K562 (cell line): ENCODE measurements at regions of chr6 and their contacts with region 1.

Region 1: GRCh38 chr6:82270881-82271645 is 23.5 kb upstream of the IBTK start:
- DNase-seq: peak; percentile 38 to 44 (median 40)
- ATAC-seq: peak; percentile 71
- H3K4me3 ChIP-seq: no peak overlapping the region
- H3K27ac ChIP-seq: no peak overlapping the region
- H3K4me1 ChIP-seq: no peaks in the 10 kb centered on the region
- H3K27me3 ChIP-seq: peaks cover 4 to 5% of the 10 kb centered on the region in 2 experiments; a peak in 3 of 5 replicates
- CTCF ChIP-seq: peak in 2 of 3 experiments; percentile 36 to 73; a peak in 4 of 6 replicates
- EP300 ChIP-seq: no peak
- POLR2A ChIP-seq: no peak
- RAD21 ChIP-seq: peak; percentile 82 to 87

Region 2: GRCh38 chr6:82017288-82017687 is 253.8 kb before region 1 on chr6:
- CTCF ChIA-PET with region 1: no interaction called
- POLR2A ChIA-PET with region 1: no interaction called
- in situ Hi-C with region 1: no loop called
- intact Hi-C with region 1: no loop called
- DNase-seq: no peak
- ATAC-seq: no peak
- H3K4me3 ChIP-seq: no peak overlapping the region
- H3K27ac ChIP-seq: no peak overlapping the region
- H3K4me1 ChIP-seq: no peaks in the 10 kb centered on the region
- H3K27me3 ChIP-seq: no peaks in the 10 kb centered on the region
- CTCF ChIP-seq: no peak
- EP300 ChIP-seq: no peak
- POLR2A ChIP-seq: no peak
- RAD21 ChIP-seq: no peak

Region 3: GRCh38 chr6:82353848-82354247 is 82.8 kb after region 1 on chr6:
- CTCF ChIA-PET with region 1: no interaction called
- POLR2A ChIA-PET with region 1: no interaction called
- in situ Hi-C with region 1: no loop called
- intact Hi-C with region 1: no loop called
- DNase-seq: no peak
- ATAC-seq: no peak
- H3K4me3 ChIP-seq: no peak overlapping the region
- H3K27ac ChIP-seq: no peak overlapping the region
- H3K4me1 ChIP-seq: no peaks in the 10 kb centered on the region
- H3K27me3 ChIP-seq: no peaks in the 10 kb centered on the region
- CTCF ChIP-seq: no peak
- EP300 ChIP-seq: no peak
- POLR2A ChIP-seq: no peak
- RAD21 ChIP-seq: no peak

Region 4: DNA sequence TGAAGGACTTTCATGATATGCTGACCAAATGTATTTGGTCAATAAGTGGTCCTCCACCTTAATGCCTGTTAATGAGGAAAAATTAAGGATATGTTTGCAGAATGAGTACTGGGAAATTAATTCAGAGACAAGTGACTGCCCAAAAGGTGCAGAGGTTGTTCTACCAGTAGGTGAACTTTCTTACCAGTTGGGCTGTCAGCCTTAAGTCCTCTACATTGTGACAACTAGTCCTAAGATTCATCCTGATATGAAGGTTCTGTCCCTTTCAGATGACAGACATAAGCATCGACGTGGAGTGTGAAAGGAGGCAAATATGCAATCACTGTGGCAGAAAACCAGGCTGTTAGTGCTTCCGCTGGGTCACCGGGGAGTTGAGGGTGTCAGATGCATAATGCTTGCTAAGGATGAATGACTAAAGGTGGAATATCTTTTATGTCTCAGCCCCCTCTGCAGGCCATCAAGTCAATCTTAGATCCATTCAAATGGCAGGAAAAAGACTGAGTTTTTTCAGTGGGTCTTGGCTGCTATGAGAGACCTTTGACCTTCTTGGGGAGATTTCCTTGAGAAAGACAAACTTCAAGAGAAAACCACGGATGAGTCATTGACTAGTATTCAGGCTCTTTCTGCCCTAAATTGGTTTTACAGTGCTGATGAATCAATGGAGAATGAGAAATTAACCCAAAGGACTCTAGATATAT is 318.6 kb after region 1 on chr6:
- CTCF ChIA-PET with region 1: interaction called, 3 read pairs
- POLR2A ChIA-PET with region 1: no interaction called
- in situ Hi-C with region 1: no loop called
- intact Hi-C with region 1: loop called (anchors 5 kb)
- DNase-seq: peak in 2 of 4 experiments; percentile 8 to 10
- ATAC-seq: peak; percentile 66
- H3K4me3 ChIP-seq: no peak overlapping the region
- H3K27ac ChIP-seq: no peak overlapping the region
- H3K4me1 ChIP-seq: no peaks in the 10 kb centered on the region
- H3K27me3 ChIP-seq: no peaks in the 10 kb centered on the region
- CTCF ChIP-seq: peak in 1 of 3 experiments; percentile 46; a peak in 2 of 6 replicates
- EP300 ChIP-seq: no peak
- POLR2A ChIP-seq: no peak
- RAD21 ChIP-seq: peak; percentile 61 to 77

Region 5: GRCh38 chr6:82712852-82713251 is 441.8 kb after region 1 on chr6:
- CTCF ChIA-PET with region 1: no interaction called
- POLR2A ChIA-PET with region 1: no interaction called
- in situ Hi-C with region 1: no loop called
- intact Hi-C with region 1: loop called (anchors 2 kb)
- DNase-seq: peak; percentile 6 to 36 (median 27)
- ATAC-seq: 0 out of 3 replicates have a peak, but pooled peaks have one; percentile 58
- H3K4me3 ChIP-seq: no peak overlapping the region
- H3K27ac ChIP-seq: no peak overlapping the region
- H3K4me1 ChIP-seq: no peaks in the 10 kb centered on the region
- H3K27me3 ChIP-seq: peaks cover 0 to 3% of the 10 kb centered on the region in 2 experiments; a peak in 1 of 5 replicates
- CTCF ChIP-seq: peak in 1 of 3 experiments; percentile 61; a peak in 2 of 6 replicates
- EP300 ChIP-seq: no peak
- POLR2A ChIP-seq: no peak
- RAD21 ChIP-seq: peak; percentile 25 to 61; a peak in 3 of 4 replicates

Region 6: GRCh38 chr6:83215131-83216047 is 944.3 kb after region 1 on chr6:
- CTCF ChIA-PET with region 1: no interaction called
- POLR2A ChIA-PET with region 1: no interaction called
- in situ Hi-C with region 1: no loop called
- intact Hi-C with region 1: loop called (anchors 10 kb)
- DNase-seq: peak; percentile 41 to 77 (median 44)
- ATAC-seq: peak; percentile 99
- H3K4me3 ChIP-seq: no peak overlapping the region
- H3K27ac ChIP-seq: no peak overlapping the region
- H3K4me1 ChIP-seq: no peaks in the 10 kb centered on the region
- H3K27me3 ChIP-seq: no peaks in the 10 kb centered on the region
- CTCF ChIP-seq: peak; percentile 84 to 91 (median 90)
- EP300 ChIP-seq: no peak
- POLR2A ChIP-seq: no peak
- RAD21 ChIP-seq: peak; percentile 86 to 91